ENCODE measurements at regions of chr10 and their contacts with region 1.

Region 1: GRCh38 chr10:114856544-114857282 is 35.1 kb downstream of the FHIP2A start:
- DNase-seq: no peak

Region 2: GRCh38 chr10:114791768-114792167 is 64.9 kb before region 1 on chr10:
- in situ Hi-C with region 1: loop called (anchors 5 kb)
- DNase-seq: no peak

Region 3: DNA sequence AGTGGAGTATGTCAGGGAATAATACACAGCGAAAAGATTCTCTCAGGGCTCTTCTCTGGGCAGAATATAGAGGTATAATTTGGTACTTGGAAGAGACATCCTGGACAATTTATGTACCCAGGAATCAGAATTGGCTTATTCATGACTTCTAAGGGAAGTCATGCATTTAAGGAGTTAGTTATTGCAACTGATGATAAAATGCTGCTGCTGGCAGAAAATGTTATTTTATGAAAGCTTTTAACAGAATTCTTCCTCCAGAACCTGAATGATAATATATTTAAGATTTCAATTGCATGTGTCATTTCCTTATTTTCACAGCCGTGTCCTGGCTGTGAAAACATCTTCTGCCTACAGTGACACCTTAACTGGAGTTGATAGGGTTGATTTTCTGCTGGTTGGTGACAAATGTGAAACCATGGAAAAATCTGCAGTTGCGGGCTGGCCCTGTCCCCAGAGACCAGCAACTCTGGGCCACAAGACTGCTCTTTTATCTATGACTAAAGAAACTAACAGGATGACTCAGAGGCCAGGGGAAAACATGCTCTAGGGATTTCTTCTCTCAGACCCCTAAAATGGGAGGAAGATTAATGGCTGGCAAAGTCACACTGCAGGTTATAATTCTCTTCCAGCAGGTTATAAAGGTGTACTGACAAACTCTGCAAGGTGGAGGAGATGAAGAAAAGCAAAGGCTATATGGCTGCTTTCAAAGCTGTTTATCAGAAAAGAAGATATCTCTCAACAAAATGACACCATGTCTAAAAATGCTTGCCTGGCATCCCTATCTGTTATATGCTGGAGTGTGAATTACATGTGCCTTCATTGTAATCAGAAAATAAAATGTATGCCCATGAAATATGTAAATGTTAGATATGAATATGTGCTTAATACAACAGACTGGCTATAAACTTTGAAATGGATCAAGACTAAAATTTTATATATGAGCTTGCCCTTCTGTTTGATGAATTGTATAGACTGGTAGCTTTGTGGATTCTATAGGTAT is 69.2 kb after region 1 on chr10:
- in situ Hi-C with region 1: no loop called
- DNase-seq: peak; percentile 95

Region 4: DNA sequence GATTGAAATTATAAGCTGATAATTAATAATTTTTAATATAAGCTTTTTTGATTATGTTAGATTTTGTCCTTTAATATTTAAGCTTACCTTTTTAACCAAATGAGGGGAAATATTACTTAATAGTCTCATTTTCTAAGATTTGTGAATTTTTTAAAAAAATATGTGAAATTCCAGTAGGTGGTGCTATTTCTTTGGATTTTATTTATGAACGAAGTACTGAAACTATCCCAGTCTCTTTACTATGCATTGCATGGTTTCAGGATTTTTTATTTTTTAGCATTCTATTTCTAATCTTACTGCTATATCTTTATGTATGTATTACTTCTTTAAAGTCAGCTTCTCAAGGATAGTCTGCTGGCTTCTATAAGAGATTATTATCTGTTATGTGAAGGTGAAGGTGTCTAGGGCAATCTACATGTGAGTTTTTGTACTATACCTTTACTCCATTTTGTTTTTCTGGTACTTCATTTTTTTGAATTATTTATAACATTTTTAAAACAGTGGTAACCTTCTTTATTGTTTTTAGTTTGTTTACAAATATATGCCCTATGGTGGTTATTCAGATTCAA is 314.8 kb after region 1 on chr10:
- in situ Hi-C with region 1: no loop called
- DNase-seq: peak; percentile 6